ENCODE measurements at regions of chr1 and their contacts with region 1.

Region 1: DNA sequence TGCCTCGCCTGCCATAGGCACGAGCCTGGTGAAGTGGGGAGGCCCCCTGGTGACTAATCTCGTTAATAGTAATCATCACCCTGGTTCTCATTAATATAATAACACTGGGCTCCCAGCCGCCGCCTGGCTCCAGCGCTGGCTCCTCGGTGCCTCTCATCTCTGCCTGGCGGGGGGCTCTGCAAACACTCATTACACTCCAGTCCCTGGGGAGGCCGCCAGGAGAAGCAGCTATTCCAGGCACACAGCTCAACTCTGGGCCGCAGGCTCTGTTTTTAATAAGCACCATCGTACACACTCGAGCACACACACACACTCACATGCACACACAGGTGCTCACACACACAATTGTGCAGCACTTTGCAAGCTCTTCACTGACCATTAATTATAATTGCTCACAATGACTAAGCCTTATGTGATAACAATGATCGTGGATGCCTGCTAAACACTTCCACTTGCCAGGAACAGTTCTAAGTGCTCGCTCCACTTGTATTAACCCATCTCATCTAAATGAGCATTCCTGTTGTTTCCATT is 52.2 kb downstream of the SDC3 start:
- DNase-seq: no peak
- H3K4me3 Mint-ChIP-seq: no peak overlapping the region
- H3K27ac Mint-ChIP-seq: no peak overlapping the region
- H3K4me1 Mint-ChIP-seq: peaks cover 21% of the 10 kb centered on the region
- H3K27me3 Mint-ChIP-seq: no peaks in the 10 kb centered on the region
- CTCF ChIP-seq: no peak

Region 2: DNA sequence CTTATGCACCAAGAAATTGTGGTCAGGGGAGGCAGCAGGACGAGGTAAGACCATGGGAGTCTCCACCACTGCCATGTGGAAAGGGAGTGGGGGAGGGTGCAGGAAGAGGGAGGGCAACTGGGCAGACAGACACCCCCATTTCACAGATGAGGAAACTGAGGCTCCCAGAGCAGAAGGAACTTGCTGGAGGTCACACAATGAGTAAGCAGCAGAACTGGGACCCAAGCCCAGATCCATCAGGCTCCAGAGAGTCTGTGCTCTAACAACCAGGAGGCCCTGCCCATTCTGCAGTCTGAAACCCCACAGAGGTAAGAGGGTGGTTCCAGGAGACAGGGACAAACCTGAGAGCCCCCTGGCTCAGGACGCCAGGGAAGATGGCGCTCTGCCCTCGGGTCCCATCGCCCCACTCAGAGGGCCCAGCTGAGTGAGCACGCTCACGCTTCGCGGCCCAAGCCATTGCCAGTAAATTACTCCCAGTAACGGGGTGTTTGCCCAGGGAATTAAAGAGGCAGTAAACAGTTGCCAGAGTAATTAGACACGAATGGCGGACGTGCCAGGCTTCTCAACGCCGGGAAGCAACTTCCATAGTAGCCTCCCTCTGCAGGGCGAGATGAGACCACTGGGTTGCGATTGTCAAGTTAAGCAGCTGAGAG is 192.1 kb before region 1 on chr1:
- CTCF ChIA-PET with region 1: no interaction called
- POLR2A ChIA-PET with region 1: no interaction called
- intact Hi-C with region 1: no loop called
- DNase-seq: no peak
- H3K4me3 Mint-ChIP-seq: no peak overlapping the region
- H3K27ac Mint-ChIP-seq: no peak overlapping the region
- H3K4me1 Mint-ChIP-seq: peaks cover 12% of the 10 kb centered on the region
- H3K27me3 Mint-ChIP-seq: no peaks in the 10 kb centered on the region
- CTCF ChIP-seq: no peak

Region 3: DNA sequence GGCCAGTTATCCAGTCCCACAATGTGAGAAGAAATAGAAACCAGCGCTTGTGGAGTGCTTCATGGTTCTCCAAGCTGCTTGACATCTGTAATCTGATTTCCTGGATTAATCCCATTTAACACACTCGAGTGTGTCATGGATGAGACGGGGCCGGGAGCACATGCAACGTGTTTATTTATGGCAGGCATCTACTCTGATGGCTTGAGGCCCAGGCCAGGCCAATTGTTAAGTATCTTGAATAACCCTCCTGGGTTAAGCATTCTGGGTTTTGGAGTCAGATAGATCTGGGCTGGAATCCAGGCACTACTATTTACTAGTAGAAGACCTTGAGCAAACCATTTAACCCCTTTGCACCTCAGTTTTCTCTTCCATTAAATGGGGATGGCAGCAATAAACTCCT is 61.3 kb before region 1 on chr1:
- CTCF ChIA-PET with region 1: no interaction called
- POLR2A ChIA-PET with region 1: no interaction called
- intact Hi-C with region 1: no loop called
- DNase-seq: no peak
- H3K4me3 Mint-ChIP-seq: no peak overlapping the region
- H3K27ac Mint-ChIP-seq: no peak overlapping the region
- H3K4me1 Mint-ChIP-seq: peaks cover 42% of the 10 kb centered on the region
- H3K27me3 Mint-ChIP-seq: no peaks in the 10 kb centered on the region
- CTCF ChIP-seq: no peak

Region 4: GRCh38 chr1:30823969-30824735 is 32.2 kb before region 1 on chr1:
- CTCF ChIA-PET with region 1: no interaction called
- POLR2A ChIA-PET with region 1: interaction called, 4 read pairs
- intact Hi-C with region 1: loop called (anchors 5 kb)
- DNase-seq: peak; percentile 99
- H3K4me3 Mint-ChIP-seq: peak overlapping the region; percentile 73
- H3K27ac Mint-ChIP-seq: peak overlapping the region; percentile 89
- H3K4me1 Mint-ChIP-seq: peaks cover 26% of the 10 kb centered on the region
- H3K27me3 Mint-ChIP-seq: no peaks in the 10 kb centered on the region
- CTCF ChIP-seq: no peak

Region 5: DNA sequence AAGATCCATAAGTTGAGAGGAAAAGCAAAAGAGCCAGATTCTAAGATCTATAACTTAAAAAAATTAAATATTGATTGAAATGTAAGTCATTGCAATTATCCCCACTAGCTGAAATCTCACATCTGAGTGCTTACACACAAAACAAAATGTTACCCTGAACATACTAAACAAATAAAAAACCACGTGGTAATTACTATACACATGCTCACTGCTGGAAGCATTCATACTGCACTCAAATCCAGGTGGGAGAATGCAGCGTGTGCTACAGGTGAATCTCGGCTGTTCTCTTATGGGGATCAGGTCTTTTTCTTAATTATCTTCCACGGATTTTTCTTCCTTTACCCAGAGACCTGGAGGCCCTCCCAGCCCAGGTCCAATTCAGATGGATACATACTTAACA is 22.1 kb before region 1 on chr1:
- CTCF ChIA-PET with region 1: no interaction called
- POLR2A ChIA-PET with region 1: no interaction called
- intact Hi-C with region 1: no loop called
- DNase-seq: no peak
- H3K4me3 Mint-ChIP-seq: no peak overlapping the region
- H3K27ac Mint-ChIP-seq: no peak overlapping the region
- H3K4me1 Mint-ChIP-seq: no peaks in the 10 kb centered on the region
- H3K27me3 Mint-ChIP-seq: peaks cover 35% of the 10 kb centered on the region
- CTCF ChIP-seq: no peak

Measured in MCF 10A (cell line).